HepG2 (cell line): ENCODE measurements at regions of chr7 and their contacts with region 1.

Region 1: DNA sequence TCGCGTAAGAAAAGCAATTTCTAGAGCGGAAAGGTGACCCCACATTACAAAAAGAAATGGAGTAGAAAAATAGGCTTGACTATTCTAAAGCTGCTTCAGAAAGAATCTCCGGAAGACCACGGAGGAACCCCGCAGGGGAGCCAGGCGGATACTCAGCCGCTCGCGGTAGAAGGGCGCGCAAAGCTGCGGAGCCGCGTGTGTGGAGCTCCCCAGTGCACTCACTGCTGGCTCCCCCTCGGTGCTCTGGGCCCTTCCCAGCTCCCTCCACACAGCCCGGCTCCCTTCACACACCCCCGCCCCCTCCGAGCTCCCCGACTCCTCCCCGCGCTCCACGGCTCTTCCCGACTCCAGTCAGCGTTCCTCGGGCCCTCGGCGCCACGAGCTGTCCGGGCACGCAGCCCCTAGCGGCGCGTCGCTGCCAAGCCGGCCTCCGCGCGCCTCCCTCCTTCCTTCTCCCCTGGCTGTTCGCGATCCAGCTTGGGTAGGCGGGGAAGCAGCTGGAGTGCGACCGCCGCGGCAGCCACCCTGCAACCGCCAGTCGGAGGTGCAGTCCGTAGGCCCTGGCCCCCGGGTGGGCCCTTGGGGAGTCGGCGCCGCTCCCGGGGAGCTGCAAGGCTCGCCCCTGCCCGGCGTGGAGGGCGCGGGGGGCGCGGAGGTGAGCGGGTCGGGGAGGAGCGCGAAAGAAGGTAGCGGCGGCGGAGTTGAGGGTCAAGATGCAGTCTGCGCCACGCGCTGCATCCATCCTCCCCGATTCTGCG is at the start of gene STEAP2:
- DNase-seq: peak; percentile 81
- ATAC-seq: peak; percentile 98
- H3K4me3 ChIP-seq: peak within 1 kb of the TSS; percentile 65 to 87 (median 83)
- H3K27ac ChIP-seq: peak within 1 kb of the TSS; percentile 94
- H3K4me1 ChIP-seq: peaks cover 30% of the 10 kb centered on the region
- H3K27me3 ChIP-seq: peaks cover 0 to 5% of the 10 kb centered on the region in 2 experiments; a peak in 1 of 5 replicates
- CTCF ChIP-seq: peak; percentile 91
- EP300 ChIP-seq: peak in 1 of 2 experiments; percentile 41; a peak in 1 of 4 replicates
- POLR2A ChIP-seq: peak; percentile 80 to 86
- RAD21 ChIP-seq: peak; percentile 79
- total RNA-seq, gene STEAP2: 3.5 and 4.3 TPM in 2 replicates

Region 2: GRCh38 chr7:90173127-90173844 is 38.3 kb before region 1 on chr7:
- CTCF ChIA-PET with region 1: no interaction called
- POLR2A ChIA-PET with region 1: interaction called, 65 read pairs
- in situ Hi-C with region 1: no loop called
- intact Hi-C with region 1: loop called (anchors 1 kb)
- DNase-seq: peak; percentile 77
- ATAC-seq: peak; percentile 98
- H3K4me3 ChIP-seq: peak overlapping the region; percentile 29 to 49 (median 49); a peak in 5 of 6 replicates
- H3K27ac ChIP-seq: peak overlapping the region; percentile 85
- H3K4me1 ChIP-seq: peaks cover 35% of the 10 kb centered on the region
- H3K27me3 ChIP-seq: no peaks in the 10 kb centered on the region
- CTCF ChIP-seq: no peak
- EP300 ChIP-seq: peak in 1 of 2 experiments; percentile 57; a peak in 2 of 4 replicates
- POLR2A ChIP-seq: no peak
- RAD21 ChIP-seq: no peak

Region 3: DNA sequence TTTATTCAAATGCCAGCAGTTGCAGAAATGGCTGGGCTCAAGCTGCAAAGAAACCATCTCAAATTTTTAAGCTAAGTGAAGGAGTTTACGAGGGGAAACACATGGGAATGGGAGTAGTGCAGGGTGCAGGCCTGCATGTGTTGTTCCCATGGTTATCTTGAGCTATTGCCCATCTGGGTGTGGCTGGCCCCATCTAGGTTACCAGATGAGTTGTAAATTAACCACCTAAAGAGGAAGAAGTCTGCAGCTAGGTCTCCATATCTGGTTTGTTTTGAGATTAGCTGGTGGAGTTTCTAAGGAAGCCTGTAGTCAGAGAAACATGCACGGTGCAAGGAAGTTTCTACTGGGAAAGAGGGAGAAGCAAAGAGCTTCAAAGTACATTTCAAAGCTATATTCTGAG is 23.3 kb before region 1 on chr7:
- CTCF ChIA-PET with region 1: no interaction called
- POLR2A ChIA-PET with region 1: interaction called, 31 read pairs
- in situ Hi-C with region 1: no loop called
- intact Hi-C with region 1: no loop called
- DNase-seq: no peak
- ATAC-seq: peak; percentile 82
- H3K4me3 ChIP-seq: no peak overlapping the region
- H3K27ac ChIP-seq: no peak overlapping the region
- H3K4me1 ChIP-seq: peaks cover 8% of the 10 kb centered on the region
- H3K27me3 ChIP-seq: no peaks in the 10 kb centered on the region
- CTCF ChIP-seq: no peak
- EP300 ChIP-seq: no peak
- POLR2A ChIP-seq: no peak
- RAD21 ChIP-seq: no peak

Region 4: DNA sequence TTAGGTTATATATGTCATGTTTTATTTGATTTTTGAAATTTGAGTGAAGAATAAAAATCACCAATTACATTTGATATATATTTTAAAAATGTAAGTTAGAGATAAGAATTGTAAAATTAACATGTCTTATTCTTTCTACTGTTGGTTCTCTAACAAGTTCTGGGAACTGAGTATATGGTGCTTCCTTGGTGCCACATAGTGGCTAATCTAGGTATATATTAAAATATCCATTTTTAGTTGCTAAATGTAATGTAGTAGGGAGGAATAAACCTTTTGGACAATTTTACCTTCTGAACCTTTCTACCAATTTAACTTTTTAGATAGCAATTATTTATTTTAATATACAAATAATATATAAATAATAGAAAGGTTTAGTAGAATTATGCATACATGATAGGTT is 50.9 kb after region 1 on chr7:
- CTCF ChIA-PET with region 1: no interaction called
- POLR2A ChIA-PET with region 1: interaction called, 6 read pairs
- in situ Hi-C with region 1: no loop called
- intact Hi-C with region 1: loop called (anchors 1 kb)
- DNase-seq: no peak
- ATAC-seq: peak; percentile 74
- H3K4me3 ChIP-seq: no peak overlapping the region
- H3K27ac ChIP-seq: no peak overlapping the region
- H3K4me1 ChIP-seq: peaks cover 16% of the 10 kb centered on the region
- H3K27me3 ChIP-seq: no peaks in the 10 kb centered on the region
- CTCF ChIP-seq: peak; percentile 51
- EP300 ChIP-seq: no peak
- POLR2A ChIP-seq: no peak
- RAD21 ChIP-seq: no peak